ENCODE measurements at regions of chr5 and their contacts with region 1.

Region 1: DNA sequence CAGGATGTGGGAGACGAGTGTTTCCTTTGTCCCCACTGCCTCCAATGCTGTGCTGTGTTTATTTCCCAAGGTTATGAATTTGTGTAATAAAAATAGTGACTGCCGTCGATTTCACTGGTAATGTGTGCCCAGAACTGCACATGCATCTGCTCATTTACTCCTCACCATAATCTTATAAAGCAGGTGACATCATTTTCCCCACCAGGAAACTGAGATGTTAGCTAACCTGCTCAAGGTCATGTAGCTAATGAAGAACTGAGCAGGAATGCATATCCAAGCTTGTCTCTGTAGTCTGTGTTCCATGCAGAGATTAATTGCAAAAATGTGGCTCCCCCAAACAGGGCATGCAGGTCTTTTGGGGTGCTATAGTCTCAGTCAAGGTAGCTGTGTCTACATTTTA is 224.4 kb downstream of the TENT4A start:
- DNase-seq: no peak
- H3K4me3 ChIP-seq: no peak overlapping the region
- H3K27ac ChIP-seq: no peak overlapping the region
- H3K4me1 ChIP-seq: no peaks in the 10 kb centered on the region
- H3K27me3 ChIP-seq: no peaks in the 10 kb centered on the region
- CTCF ChIP-seq: no peak

Region 2: DNA sequence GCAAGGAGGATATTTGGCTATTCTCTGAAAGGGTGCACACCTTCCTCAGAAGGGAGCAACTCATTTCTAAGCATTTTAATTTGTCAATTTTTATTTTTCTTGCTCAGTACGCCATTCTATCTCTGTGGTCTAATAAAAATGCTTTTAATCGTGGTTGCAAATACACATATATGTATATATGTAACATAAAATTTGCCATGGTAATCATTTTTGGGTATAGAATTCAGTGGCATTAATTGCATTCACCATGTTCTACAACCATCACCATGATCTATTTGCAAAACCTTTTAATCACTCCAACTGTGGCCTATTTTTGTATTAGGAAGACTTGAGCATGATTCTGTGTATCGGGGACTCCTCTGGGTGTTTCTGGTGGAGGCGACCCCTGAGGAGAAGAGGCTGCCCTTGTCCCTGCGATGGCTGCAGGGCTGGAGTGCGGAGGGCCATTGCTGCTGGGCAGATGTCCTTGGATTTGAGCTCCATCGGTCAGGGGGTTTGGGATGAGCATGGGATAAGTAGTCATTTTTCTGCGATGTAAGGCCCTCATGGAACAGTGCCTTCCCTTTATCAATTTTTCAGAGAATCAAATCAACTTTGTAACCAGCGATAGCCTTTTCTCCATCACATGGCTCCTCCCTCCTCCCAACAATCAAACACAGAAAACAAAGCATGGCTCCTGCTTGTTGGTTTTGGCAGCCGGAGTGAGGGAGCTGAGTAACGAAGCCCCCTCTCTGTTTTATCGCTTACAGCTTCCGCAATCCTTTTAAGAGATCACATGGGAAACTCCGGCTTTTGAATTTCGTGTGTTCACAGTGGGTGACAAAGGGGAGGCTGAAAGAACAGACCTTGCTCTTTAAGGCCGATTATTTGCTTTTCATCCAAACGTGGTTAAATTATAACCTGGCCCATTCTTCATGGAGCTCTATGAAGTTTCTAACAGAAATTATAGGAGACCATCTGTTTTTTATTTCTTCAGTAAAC is 37.1 kb before region 1 on chr5:
- CTCF ChIA-PET with region 1: no interaction called
- dilution Hi-C with region 1: loop called (anchors 5 kb)
- in situ Hi-C with region 1: no loop called
- intact Hi-C with region 1: no loop called
- DNase-seq: no peak
- H3K4me3 ChIP-seq: no peak overlapping the region
- H3K27ac ChIP-seq: no peak overlapping the region
- H3K4me1 ChIP-seq: no peaks in the 10 kb centered on the region
- H3K27me3 ChIP-seq: no peaks in the 10 kb centered on the region
- CTCF ChIP-seq: no peak

Region 3: DNA sequence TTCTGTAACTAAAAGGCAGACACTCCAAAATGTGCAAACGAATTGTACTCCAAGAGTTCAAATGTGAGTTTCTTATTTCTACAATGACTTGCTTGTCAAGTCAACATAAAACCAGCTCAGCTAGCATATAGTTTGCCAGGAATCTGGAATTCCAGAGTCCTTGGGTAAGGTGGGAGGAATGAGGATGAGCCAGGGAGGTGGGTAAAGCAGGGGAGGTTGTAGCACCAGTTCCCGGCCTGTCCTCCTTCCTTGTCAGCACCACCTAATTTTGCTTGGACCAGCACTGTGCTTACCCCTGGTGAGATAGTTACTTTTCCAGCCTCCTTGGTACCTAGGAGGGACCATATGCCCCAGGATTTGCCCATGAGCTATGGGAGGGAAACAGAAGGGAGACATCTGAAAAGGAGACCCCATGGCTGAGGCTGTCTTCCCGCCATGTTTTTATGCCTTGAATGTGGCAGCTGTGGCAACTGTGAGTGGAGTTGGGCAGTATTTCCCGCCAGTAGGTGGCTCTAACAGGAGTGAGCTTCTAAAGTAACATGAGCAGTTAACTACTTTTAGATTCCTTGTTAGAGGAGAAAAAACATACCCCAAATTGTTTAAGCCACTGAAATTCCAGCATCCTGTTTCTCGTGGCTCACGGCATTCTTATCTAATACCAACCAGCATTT is 78.0 kb after region 1 on chr5:
- CTCF ChIA-PET with region 1: no interaction called
- dilution Hi-C with region 1: no loop called
- in situ Hi-C with region 1: no loop called
- intact Hi-C with region 1: no loop called
- DNase-seq: no peak
- H3K4me3 ChIP-seq: no peak overlapping the region
- H3K27ac ChIP-seq: no peak overlapping the region
- H3K4me1 ChIP-seq: no peaks in the 10 kb centered on the region
- H3K27me3 ChIP-seq: no peaks in the 10 kb centered on the region
- CTCF ChIP-seq: no peak

Region 4: DNA sequence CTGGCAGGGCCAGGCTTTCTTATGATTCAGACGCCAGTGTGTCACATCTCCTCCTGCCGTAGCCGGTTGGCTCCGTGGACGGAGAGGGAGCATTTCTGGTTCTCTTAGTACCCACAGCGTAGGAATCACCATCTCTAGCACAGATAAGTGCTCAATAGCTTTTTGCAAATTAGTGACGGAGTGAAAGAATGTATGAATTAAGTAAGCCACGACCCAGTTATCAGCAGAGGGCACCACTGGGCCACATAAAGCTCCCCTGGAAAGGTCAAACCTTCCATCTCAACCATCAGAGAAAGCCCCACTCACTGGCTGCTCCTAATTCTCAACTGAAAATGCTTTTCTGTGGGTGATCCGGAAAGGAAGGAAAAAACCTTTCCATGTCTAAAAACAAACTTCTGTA is 141.2 kb after region 1 on chr5:
- CTCF ChIA-PET with region 1: no interaction called
- dilution Hi-C with region 1: loop called (anchors 10 kb)
- in situ Hi-C with region 1: no loop called
- intact Hi-C with region 1: no loop called
- DNase-seq: no peak
- H3K4me3 ChIP-seq: no peak overlapping the region
- H3K27ac ChIP-seq: no peak overlapping the region
- H3K4me1 ChIP-seq: no peaks in the 10 kb centered on the region
- H3K27me3 ChIP-seq: no peaks in the 10 kb centered on the region
- CTCF ChIP-seq: no peak

Region 5: DNA sequence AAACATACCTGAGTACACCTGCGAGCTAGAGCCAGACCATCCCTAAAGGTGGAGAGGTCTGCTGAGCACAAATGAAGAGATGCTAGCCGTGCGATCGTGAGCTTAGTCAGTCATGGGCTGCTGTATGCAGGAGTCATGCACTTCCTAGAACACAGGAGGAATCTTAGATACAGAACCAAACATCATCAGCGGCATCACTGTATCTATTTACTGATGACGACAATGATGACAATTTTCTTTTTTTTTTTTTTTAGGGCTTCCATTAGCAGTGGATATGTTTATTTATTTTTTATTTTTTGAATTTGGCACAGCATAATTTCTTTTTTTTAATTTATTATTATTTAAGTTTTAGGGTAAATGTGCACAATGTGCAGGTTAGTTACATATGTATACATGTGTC is 187.3 kb after region 1 on chr5:
- CTCF ChIA-PET with region 1: no interaction called
- dilution Hi-C with region 1: no loop called
- in situ Hi-C with region 1: no loop called
- intact Hi-C with region 1: no loop called
- DNase-seq: no peak
- H3K4me3 ChIP-seq: no peak overlapping the region
- H3K27ac ChIP-seq: no peak overlapping the region
- H3K4me1 ChIP-seq: no peaks in the 10 kb centered on the region
- H3K27me3 ChIP-seq: no peaks in the 10 kb centered on the region
- CTCF ChIP-seq: no peak

Measured in mammary epithelial cell (primary cell).